Ovary (tissue), 10 donors: ENCODE measurements at regions of chr13 and their contacts with region 1.

Region 1: GRCh38 chr13:48222358-48223301 is 10.4 kb upstream of the ITM2B start:
- DNase-seq: peak; percentile 56 to 74 (median 62)
- H3K4me3 ChIP-seq: peak overlapping the region; percentile 36
- H3K27ac ChIP-seq: peak overlapping the region; percentile 74 to 95
- H3K4me1 ChIP-seq: peaks cover 12% of the 10 kb centered on the region
- H3K27me3 ChIP-seq: no peaks in the 10 kb centered on the region
- CTCF ChIP-seq: no peak
- EP300 ChIP-seq: peak; percentile 4
- POLR2A ChIP-seq: peak; percentile 5

Region 2: DNA sequence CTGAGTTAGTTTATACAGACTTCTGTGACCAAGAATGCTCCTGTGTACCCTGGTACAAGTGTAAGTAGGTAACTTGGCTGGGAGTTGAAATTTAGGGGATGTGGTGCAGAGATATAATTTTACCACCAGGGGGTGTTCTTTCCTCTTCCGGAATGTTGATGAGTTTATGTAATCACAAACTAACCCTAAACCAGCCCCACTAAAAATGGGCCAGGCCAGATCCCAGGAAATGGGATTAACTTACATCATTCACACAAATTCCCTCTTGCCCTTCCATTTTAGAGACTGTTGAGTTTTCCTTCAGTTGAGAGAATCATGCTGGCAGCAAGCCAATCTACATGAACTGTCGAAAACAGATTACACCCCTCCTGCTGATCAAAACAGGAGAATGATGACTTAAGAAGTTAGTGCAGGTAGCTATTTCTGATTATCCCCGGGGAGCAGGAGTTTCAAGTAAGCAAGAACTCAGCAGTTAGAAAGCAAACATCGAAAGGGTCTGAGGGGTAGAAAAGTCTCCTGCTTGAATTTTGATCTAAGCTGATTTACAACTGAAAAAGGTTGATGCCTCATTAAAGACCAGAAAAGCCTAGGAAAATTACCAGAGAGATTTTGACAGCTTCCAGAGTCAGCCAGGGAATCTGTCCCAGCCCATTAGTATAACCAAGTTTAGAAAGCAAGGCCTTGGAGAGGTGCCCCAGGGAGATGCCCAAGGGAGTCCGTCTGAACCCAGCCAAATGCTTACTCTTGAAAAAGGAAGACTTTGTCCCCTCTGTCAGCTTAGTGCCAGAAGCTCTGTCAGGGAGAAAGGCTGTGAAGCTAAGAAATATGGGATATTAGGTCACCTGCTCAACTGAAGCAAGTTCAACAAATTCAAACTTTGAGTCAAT is 95.4 kb before region 1 on chr13:
- intact Hi-C with region 1: loop called in 2 of 4 experiments (anchors 5 kb)
- DNase-seq: peak; percentile 27 to 66 (median 48)
- H3K4me3 ChIP-seq: no peak overlapping the region
- H3K27ac ChIP-seq: peak overlapping the region in 1 of 2 donors; percentile 39
- H3K4me1 ChIP-seq: peaks cover 12% of the 10 kb centered on the region
- H3K27me3 ChIP-seq: no peaks in the 10 kb centered on the region
- CTCF ChIP-seq: peak; percentile 42 to 76 (median 71)
- EP300 ChIP-seq: no peak
- POLR2A ChIP-seq: no peak